Endothelial cell of umbilical vein (primary cell): ENCODE measurements at regions of chr11 and their contacts with region 1.

Region 1: GRCh38 chr11:64688534-64688982 is 34.4 kb downstream of the NRXN2 start:
- DNase-seq: peak; percentile 92
- H3K4me3 ChIP-seq: peak overlapping the region in 2 of 3 experiments; percentile 29 to 40
- H3K27ac ChIP-seq: no peak overlapping the region
- H3K4me1 ChIP-seq: no peaks in the 10 kb centered on the region
- H3K27me3 ChIP-seq: peaks cover 11 to 19% of the 10 kb centered on the region in 2 experiments
- CTCF ChIP-seq: peak; percentile 89 to 94
- POLR2A ChIP-seq: no peak

Region 2: DNA sequence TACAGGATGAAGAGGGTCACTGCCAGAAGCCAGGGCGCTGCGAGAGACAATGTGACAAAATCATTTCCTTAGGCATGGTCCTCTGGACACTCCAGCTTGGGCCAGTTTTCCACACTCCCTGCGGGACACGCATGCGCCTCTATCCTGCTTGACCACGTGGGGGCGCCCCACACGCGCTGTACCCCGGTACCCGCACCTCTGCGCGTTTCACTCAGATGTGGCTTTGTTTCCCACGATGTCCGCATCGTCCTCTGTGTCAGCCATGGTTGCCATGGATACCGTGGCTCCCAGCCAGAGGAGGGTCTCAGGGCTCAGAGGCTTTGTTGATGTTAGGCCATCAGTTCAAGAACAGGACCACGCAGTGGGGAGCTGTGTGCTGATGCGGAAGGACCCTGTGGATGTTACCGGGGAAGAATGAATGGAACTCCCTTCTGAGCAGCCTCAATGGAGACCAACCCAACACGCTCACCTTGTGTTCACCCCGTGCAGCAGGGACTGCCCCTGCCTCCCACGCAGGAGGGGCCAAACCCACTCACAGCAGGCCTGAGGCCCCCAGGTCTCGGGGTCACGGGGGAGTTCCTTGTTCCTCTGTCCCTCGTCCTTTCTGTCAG is 198.6 kb before region 1 on chr11:
- CTCF ChIA-PET with region 1: interaction called, 12 read pairs
- POLR2A ChIA-PET with region 1: no interaction called
- dilution Hi-C with region 1: no loop called
- intact Hi-C with region 1: no loop called
- DNase-seq: peak; percentile 29
- H3K4me3 ChIP-seq: no peak overlapping the region
- H3K27ac ChIP-seq: no peak overlapping the region
- H3K4me1 ChIP-seq: no peaks in the 10 kb centered on the region
- H3K27me3 ChIP-seq: peaks cover 4 to 12% of the 10 kb centered on the region in 2 experiments
- CTCF ChIP-seq: peak; percentile 77 to 85
- POLR2A ChIP-seq: no peak

Region 3: GRCh38 chr11:64675450-64676260 is 12.9 kb before region 1 on chr11:
- CTCF ChIA-PET with region 1: interaction called, 20 read pairs
- POLR2A ChIA-PET with region 1: no interaction called
- dilution Hi-C with region 1: no loop called
- intact Hi-C with region 1: no loop called
- DNase-seq: no peak
- H3K4me3 ChIP-seq: no peak overlapping the region
- H3K27ac ChIP-seq: no peak overlapping the region
- H3K4me1 ChIP-seq: no peaks in the 10 kb centered on the region
- H3K27me3 ChIP-seq: peaks cover 38 to 42% of the 10 kb centered on the region in 2 experiments
- CTCF ChIP-seq: no peak
- POLR2A ChIP-seq: no peak

Region 4: DNA sequence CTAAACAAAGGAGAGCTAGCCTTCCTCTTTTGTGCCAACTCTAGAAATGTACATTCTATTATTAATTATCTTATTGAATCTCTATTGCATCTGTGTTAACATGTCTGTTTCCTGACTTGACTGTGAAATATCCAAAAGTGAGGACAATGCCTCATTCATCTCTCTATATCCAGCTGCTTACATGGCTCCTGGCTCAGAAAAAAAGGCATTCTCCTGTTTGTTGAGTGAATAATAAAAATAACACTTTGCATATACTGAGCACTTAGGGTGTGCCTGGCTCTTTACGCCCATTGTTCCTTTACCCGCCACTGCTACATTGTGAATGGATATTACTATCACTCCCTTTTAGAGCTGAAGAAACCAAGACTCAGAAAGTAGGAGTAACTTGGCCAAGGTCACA is 14.5 kb after region 1 on chr11:
- CTCF ChIA-PET with region 1: interaction called, 31 read pairs
- POLR2A ChIA-PET with region 1: no interaction called
- dilution Hi-C with region 1: no loop called
- intact Hi-C with region 1: no loop called
- DNase-seq: no peak
- H3K4me3 ChIP-seq: no peak overlapping the region
- H3K27ac ChIP-seq: no peak overlapping the region
- H3K4me1 ChIP-seq: no peaks in the 10 kb centered on the region
- H3K27me3 ChIP-seq: peaks cover 14 to 23% of the 10 kb centered on the region in 2 experiments
- CTCF ChIP-seq: no peak
- POLR2A ChIP-seq: no peak

Region 5: DNA sequence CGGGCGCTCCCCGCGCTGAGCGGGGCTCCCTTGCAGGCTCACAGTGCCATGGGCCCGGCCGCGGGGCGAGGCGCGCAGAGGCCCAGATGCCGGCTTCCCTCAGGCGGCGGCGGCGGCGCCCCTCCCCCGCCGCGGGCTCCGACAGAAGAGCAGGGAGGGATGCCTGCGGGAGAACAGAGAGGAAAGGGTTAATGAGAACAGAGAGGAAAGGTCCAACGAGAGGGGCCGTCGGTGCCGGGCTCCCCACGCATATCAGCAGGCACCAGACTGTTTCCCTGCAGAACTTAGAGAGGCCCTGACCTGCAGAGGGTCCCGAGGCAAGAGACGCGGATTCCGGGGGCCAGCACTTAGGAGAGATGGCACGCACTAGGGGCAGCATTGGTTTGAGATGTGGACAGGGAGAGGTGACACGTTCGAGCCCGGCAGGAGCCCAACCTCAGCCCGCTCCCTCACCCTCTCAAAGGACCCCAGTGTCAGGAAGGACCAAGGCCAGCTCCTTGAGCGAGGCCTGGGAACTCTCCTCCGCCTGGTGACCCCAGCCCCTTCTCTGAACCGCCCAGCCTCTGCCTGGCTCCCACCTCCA is 25.3 kb after region 1 on chr11:
- CTCF ChIA-PET with region 1: interaction called, 15 read pairs
- POLR2A ChIA-PET with region 1: no interaction called
- dilution Hi-C with region 1: no loop called
- intact Hi-C with region 1: no loop called
- DNase-seq: no peak
- H3K4me3 ChIP-seq: no peak overlapping the region
- H3K27ac ChIP-seq: no peak overlapping the region
- H3K4me1 ChIP-seq: no peaks in the 10 kb centered on the region
- H3K27me3 ChIP-seq: peaks cover 53 to 68% of the 10 kb centered on the region in 2 experiments
- CTCF ChIP-seq: no peak
- POLR2A ChIP-seq: no peak

Region 6: GRCh38 chr11:64723117-64723906 is 34.8 kb after region 1 on chr11 and contains the start of gene NRXN2:
- CTCF ChIA-PET with region 1: interaction called, 19 read pairs
- POLR2A ChIA-PET with region 1: no interaction called
- dilution Hi-C with region 1: no loop called
- intact Hi-C with region 1: loop called (anchors 1 kb)
- DNase-seq: peak; percentile 80
- H3K4me3 ChIP-seq: peak within 1 kb of the TSS; percentile 15 to 44 (median 30)
- H3K27ac ChIP-seq: no peak within 1 kb of the TSS
- H3K4me1 ChIP-seq: no peaks in the 10 kb centered on the region
- H3K27me3 ChIP-seq: peaks cover 15 to 16% of the 10 kb centered on the region in 2 experiments
- CTCF ChIP-seq: peak; percentile 97
- POLR2A ChIP-seq: no peak
- total RNA-seq, gene NRXN2: not detected in 2 replicates

Region 7: GRCh38 chr11:64742889-64743590 is 54.5 kb after region 1 on chr11:
- CTCF ChIA-PET with region 1: interaction called, 16 read pairs
- POLR2A ChIA-PET with region 1: no interaction called
- dilution Hi-C with region 1: no loop called
- intact Hi-C with region 1: loop called (anchors 1 kb)
- DNase-seq: peak; percentile 32
- H3K4me3 ChIP-seq: peak overlapping the region in 1 of 3 experiments; percentile 2
- H3K27ac ChIP-seq: no peak overlapping the region
- H3K4me1 ChIP-seq: peaks cover 13% of the 10 kb centered on the region
- H3K27me3 ChIP-seq: peaks cover 27 to 32% of the 10 kb centered on the region in 2 experiments
- CTCF ChIP-seq: peak; percentile 77 to 90
- POLR2A ChIP-seq: no peak